HAP-1 (cell line): ENCODE measurements at regions of chr1 and their contacts with region 1.

Region 1: DNA sequence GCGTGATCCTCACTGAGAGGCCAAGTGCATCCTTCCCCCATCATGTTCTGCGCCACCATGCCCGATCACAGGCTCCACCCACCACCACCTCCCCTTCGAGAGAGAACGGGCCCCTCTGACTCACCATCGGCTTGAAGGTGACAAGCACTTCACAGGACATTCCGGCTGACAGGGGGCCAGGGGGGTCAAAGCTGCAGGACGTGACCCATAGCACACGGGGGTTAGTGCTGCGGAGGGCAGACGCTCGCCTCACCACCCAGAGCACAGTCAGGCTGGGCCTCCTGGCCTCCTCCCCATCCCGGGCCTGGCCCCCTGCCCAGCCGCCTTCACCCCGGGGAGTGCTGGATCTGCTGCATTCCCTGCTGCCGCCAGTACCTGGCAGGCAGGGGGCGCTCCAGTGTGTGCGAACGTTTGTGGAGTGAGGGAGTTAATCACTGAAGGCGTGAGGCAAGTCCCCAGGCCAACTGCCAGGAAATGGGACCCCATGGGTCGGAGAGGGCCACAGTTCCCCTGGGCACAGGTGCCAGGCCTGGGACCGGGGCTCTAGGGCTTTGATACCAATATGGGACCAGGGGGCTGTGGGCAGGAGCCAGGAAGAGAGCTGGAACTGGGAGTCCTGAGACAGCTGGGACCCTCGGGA is 40.9 kb upstream of the TMEM52 start:
- DNase-seq: peak; percentile 84 to 97
- H3K4me3 ChIP-seq: peak overlapping the region; percentile 13
- H3K4me1 ChIP-seq: peaks cover 7% of the 10 kb centered on the region
- H3K27me3 ChIP-seq: no peaks in the 10 kb centered on the region

Region 2: DNA sequence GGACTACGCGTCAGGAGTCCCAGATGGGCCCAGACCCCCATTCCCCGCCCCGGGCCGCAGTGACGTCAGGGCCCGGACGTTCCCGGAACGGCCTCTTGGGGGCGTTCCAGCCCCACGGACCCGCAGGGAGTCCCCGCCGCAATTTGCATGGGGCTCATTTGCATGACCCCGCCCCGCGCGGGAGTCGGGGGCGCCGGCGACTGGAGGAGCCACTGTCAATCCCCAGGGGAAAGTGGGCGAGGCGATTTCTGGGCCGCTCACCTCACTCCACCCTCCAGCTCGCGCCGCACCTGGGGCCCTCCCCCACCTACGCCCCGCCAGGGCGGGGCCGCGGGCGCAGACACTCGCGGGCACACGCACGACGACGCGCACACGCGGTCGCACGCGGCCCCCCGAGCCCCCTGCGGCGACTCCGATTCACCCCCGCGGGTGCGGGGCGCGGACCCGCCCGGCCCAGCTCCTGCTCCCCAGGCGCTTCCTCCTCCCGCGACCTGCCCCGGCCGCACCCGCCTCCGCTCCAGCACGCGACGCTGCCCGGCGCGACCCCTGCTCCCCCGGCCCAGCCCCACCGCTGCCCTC is 926.9 kb before region 1 on chr1:
- in situ Hi-C with region 1: no loop called
- DNase-seq: peak; percentile 92 to 98
- H3K4me3 ChIP-seq: peak overlapping the region; percentile 18
- H3K4me1 ChIP-seq: 0 out of 2 replicates have a peak, but pooled peaks cover 5% of the 10 kb centered on the region
- H3K27me3 ChIP-seq: no peaks in the 10 kb centered on the region

Region 3: GRCh38 chr1:2044510-2045319 is 84.8 kb after region 1 on chr1:
- in situ Hi-C with region 1: loop called (anchors 5 kb)
- DNase-seq: peak; percentile 44 to 87
- H3K4me3 ChIP-seq: peak overlapping the region; percentile 14
- H3K4me1 ChIP-seq: peaks cover 19% of the 10 kb centered on the region
- H3K27me3 ChIP-seq: no peaks in the 10 kb centered on the region